RWPE1 (cell line): ENCODE measurements at regions of chr2 and their contacts with region 1.

Region 1: DNA sequence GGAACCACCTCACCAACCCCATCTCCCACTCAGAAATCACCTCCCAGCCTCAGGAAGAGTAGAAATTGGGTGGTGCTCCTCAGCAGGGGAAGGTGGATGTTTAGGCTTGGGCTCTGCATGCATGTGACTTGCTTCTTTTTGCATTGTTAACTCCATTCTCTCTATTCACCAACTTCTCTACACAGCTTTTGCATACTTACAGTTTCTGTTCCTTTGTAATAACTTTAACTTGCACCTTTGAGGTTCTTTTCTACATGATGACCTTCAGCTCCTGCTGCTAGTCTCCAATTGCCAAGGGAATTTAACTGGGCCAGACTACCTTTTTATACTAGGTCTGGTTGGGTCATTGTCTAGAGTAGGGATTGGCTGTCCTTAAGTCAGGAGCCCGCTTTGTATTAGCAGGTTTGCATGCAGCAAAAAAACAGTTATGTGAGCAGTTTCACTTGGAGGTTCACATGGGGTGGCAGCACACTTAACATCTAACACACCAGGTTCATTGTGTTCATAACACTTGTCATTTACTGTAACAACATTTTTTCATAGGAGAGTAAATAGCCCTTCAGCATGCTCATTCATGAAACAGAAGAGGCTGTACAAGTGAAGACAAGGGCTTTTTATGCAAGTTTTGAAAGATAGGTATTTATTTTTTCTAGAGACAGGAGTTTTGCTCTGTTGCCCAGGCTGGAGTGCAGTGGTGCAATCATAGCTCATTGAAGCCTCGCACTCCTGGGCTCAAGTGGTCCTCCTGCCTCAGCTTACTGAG is 12.0 kb downstream of the MRPL35 start:
- DNase-seq: no peak
- H3K27ac ChIP-seq: no peak overlapping the region
- CTCF ChIP-seq: no peak

Region 2: DNA sequence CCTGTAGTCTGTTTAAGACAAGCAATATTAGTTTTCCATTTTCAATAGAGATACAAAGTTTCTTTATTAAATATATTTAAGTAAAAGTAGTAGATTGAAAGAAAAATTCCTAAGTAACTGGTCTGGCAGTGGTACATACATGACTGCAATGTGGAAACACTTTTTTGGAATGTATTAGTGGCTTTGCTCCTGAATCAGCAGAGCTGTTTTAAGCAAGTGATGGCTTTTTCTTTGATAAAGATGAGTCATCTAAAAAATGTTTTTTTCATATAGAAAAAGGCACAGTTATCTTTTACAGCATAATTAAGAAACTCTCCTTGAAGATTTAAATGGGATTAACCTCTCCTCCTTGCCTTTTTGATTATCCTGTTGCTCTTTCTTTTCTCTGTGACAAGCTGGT is 264.9 kb after region 1 on chr2:
- CTCF ChIA-PET with region 1: interaction called, 10 read pairs
- POLR2A ChIA-PET with region 1: no interaction called
- DNase-seq: no peak
- H3K27ac ChIP-seq: no peak overlapping the region
- CTCF ChIP-seq: no peak